GM13976 (cell line): ENCODE measurements at regions of chr5 and their contacts with region 1.

Region 1: DNA sequence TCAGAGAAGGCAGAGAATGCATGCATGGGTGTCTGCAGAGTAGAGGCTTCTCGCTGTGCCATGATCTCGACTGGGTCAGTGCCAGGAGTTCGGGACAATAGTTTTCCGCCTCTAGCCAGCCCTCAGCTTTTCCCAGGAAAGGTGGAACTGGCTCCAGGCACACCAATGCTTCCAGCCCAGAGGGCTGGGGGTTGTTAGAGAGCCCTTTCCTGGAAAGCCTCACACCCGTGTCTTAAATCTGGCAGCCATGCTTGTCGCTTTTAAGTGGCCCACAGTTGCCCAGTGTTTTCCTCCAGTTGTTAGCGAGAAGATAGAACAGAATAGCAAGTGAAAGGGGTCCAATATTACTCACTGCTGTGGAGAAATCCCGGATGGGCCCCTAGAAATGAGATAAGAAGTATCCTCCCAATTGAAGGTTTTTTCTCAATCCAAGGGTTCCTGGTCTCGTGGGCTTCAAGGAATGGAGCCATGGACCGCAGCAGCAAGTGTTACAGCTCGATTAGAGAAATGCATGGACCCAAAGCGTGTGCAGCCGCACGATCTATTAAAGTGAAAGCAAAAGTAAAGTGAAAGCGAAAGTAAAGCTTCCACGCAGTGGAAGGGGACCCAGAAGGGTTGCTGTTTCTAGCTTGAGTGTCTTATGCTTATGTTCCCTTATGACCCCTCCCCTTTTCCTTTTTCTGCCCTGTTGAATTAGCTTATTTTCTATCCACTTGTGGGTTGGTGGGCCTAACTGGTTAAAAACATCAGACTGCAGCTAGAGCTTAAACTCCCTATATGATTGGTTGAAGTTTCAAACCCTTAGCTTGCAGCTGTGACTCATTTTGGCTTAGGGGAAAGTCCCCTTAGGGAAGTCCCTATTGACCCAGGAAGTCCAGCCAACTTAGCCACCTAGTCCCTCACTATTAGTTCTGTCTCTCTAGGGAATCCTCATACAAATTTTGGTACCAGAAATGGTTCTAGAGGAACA is 1111.7 kb downstream of the TAF11L14 start:
- DNase-seq: peak; percentile 51
- CTCF ChIP-seq: no peak

Region 2: GRCh38 chr5:17255471-17256021 is 1490.4 kb before region 1 on chr5:
- in situ Hi-C with region 1: loop called (anchors 25 kb)
- DNase-seq: no peak
- CTCF ChIP-seq: no peak

Region 3: DNA sequence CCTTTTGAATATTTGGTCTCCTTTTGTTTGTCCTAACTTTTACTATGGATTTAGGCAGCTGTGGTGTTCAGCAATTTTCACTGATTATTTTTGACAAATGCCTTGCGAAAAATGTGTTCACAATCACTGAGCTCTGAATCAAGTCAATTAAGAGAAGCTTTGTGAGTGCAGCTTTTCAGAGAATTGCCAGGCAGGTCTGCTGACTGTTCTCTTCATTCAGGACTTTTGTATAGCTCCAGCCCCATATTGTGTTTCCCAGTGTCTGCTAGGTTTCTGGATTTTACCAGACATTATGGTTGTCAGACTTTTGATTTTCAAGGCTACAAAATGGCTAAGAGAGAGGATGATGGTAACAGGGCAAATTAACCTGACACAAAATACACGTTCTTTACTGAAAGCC is 186.2 kb after region 1 on chr5:
- in situ Hi-C with region 1: no loop called
- DNase-seq: no peak
- CTCF ChIP-seq: no peak